Activated CD8-positive, alpha-beta T cell treated with anti-CD3 and anti-CD28 coated beads for 36 hours (primary cell): ENCODE measurements at regions of chr14 and their contacts with region 1.

Region 1: GRCh38 chr14:88792572-88793258 is at the start of gene EML5:
- DNase-seq: peak; percentile 81
- ATAC-seq: peak; percentile 84
- H3K4me3 Mint-ChIP-seq: peak within 1 kb of the TSS; percentile 84
- H3K27ac Mint-ChIP-seq: peak within 1 kb of the TSS; percentile 80
- H3K4me1 Mint-ChIP-seq: peaks cover 23% of the 10 kb centered on the region
- H3K27me3 Mint-ChIP-seq: no peaks in the 10 kb centered on the region
- CTCF ChIP-seq: no peak
- total RNA-seq, gene EML5: 2.7 to 3.8 TPM

Region 2: DNA sequence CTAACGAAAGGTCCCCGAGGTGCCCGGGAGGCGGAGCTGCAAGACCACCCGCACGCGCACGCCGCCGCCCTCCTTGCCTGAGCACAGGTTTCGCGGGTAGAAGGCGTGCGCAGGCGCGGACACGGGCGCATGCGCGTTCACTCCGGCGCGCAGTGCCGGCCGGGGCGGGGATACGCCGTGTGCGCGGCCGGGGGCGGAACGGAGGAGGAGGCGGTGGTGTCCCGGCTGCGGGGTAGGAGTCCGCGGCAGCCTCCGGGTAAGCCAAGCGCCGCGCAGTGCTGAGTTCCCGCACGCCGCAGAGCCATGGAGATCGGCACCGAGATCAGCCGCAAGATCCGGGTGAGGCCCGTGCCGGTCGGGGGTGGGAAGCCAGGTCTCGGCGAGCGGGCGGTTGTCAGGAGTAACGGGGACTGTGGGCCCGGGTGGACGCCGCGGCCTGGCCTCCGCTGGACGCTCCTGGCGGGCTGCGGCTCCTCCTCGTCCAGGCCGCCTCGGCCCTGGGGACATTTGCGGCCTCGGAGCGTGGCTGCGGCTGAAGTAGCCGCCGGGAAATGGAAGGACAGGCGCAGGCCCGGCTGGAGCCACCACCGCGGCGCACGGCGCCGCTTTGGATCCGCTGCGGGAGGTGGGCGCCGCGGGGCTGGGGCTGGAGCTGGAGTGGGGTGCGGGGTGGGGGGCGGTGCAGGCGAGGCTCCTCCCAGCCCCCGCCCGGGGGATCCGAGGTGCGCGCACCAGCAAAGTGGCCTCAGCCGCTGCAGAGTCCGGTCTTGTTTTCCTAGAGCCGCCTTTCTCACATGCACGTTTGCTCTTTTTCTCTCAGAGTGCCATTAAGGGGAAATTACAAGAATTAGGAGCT is 229.7 kb before region 1 on chr14 and contains the start of gene ZC3H14:
- CTCF ChIA-PET with region 1: interaction called, 3 read pairs
- POLR2A ChIA-PET with region 1: no interaction called
- intact Hi-C with region 1: loop called (anchors 10 kb)
- DNase-seq: peak; percentile 89
- ATAC-seq: peak; percentile 96
- H3K4me3 Mint-ChIP-seq: peak within 1 kb of the TSS; percentile 81
- H3K27ac Mint-ChIP-seq: peak within 1 kb of the TSS; percentile 92
- H3K4me1 Mint-ChIP-seq: peaks cover 28% of the 10 kb centered on the region
- H3K27me3 Mint-ChIP-seq: peaks cover 9% of the 10 kb centered on the region
- CTCF ChIP-seq: no peak
- total RNA-seq, gene ZC3H14: 43.9 to 50.3 TPM

Region 3: DNA sequence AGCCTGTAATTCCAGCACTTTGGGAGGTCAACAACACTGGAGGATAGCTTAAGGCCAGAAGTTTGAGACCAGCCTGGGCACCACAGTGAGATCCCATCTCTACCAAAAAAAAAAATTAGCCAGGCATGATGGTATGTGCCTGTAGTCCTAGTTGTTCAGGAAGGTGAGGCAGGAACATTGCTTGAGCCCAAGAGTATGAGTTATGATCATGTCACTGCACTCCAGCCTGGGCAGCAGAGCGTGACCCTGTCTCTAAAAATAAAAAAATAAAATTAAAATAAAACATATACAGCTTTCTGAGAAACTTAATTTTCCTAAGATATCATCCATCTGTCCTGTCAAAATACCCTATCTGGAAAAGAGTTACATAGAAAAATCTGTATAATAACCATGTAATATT is 38.8 kb before region 1 on chr14:
- CTCF ChIA-PET with region 1: no interaction called
- POLR2A ChIA-PET with region 1: no interaction called
- intact Hi-C with region 1: no loop called
- DNase-seq: no peak
- ATAC-seq: no peak
- H3K4me3 Mint-ChIP-seq: no peak overlapping the region
- H3K27ac Mint-ChIP-seq: no peak overlapping the region
- H3K4me1 Mint-ChIP-seq: no peaks in the 10 kb centered on the region
- H3K27me3 Mint-ChIP-seq: no peaks in the 10 kb centered on the region
- CTCF ChIP-seq: no peak

Region 4: GRCh38 chr14:88775513-88775927 is 17.2 kb before region 1 on chr14:
- CTCF ChIA-PET with region 1: no interaction called
- POLR2A ChIA-PET with region 1: no interaction called
- intact Hi-C with region 1: no loop called
- DNase-seq: no peak
- ATAC-seq: no peak
- H3K4me3 Mint-ChIP-seq: no peak overlapping the region
- H3K27ac Mint-ChIP-seq: no peak overlapping the region
- H3K4me1 Mint-ChIP-seq: no peaks in the 10 kb centered on the region
- H3K27me3 Mint-ChIP-seq: no peaks in the 10 kb centered on the region
- CTCF ChIP-seq: no peak